Posterior cingulate gyrus (tissue), 11 donors: ENCODE measurements at regions of chr2 and their contacts with region 1.

Region 1: GRCh38 chr2:636641-637405 is 40.4 kb downstream of the TMEM18 start:
- DNase-seq: peak; percentile 30 to 94 (median 74)

Region 2: GRCh38 chr2:175880-176800 is 460.7 kb before region 1 on chr2:
- intact Hi-C with region 1: loop called (anchors 2 kb)
- DNase-seq: no peak

Region 3: DNA sequence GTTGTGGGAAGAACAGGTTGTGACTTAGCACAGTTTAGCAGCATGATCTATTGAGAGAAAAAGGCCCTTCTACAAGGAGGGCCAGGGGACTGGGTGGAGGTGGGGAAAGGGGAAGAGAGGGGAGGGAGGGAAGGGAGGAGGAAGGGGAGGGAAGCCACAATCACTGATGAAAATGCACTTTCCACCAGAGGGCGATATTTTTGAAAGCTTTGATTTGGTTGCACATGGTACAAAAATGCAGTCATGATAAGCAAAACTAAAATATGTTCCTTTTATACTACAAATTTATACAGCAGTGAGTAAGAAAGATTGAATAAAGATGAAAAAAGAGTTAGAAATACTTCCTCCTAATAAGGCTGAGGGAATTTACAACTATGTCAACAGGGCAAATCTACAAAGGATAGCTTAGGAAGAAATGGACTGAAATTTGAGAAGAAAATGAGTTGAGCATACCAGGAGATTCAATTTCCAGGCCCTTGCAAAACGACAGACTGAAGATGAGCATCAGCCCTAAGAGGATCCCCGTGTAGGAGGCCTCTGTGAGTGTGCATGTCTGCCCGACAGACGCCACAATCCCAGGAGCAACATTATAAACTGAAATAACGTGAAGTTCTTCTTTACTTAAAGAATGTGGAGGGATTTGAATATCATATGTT is 390.2 kb before region 1 on chr2:
- intact Hi-C with region 1: loop called (anchors 10 kb)
- DNase-seq: no peak

Region 4: GRCh38 chr2:290090-290722 is 346.6 kb before region 1 on chr2:
- intact Hi-C with region 1: loop called (anchors 10 kb)
- DNase-seq: peak; percentile 64 to 98 (median 84)

Region 5: GRCh38 chr2:529425-529824 is 107.4 kb before region 1 on chr2:
- intact Hi-C with region 1: loop called (anchors 2 kb)
- DNase-seq: no peak